ENCODE measurements at regions of chr2 and their contacts with region 1.

Region 1: DNA sequence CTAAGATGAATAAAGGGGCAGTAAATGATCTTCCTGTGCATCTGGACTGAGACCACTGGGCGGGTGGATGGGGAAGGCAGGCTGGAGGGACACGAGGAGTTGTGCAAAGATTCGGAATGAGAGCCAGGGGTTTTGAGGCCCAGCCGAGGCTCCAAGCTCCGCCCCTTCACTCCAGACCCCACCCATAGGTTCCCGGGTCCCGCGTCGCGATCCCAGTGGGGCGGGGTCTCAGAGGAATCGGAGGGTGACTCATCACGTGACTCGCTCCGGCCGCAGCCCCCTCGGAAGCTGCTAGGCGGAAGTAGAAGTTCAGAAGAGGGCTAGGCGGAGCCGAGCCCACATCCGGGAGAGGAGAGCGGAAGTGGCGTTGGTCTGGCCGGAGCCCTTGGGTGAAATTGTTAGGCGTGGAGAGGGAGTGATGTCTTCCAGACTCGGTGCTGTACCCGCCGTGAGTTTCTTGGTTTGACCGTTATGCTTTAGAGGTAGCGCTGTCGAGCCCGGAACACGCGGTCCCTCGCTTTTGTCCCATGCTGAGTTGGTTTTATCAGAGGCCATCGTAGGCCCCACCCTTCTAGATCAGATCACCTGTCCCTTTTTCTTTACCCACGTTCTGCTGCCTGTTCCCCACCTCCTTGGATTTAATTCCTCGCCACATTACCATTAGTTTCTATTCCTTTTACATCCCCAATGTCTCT is at the start of gene ZNF512:
- DNase-seq: peak; percentile 98
- ATAC-seq: peak; percentile 93
- H3K4me3 ChIP-seq: peak within 1 kb of the TSS; percentile 54
- H3K27ac ChIP-seq: peak within 1 kb of the TSS; percentile 83
- H3K4me1 ChIP-seq: peaks cover 13 to 43% of the 10 kb centered on the region in 2 experiments
- H3K27me3 ChIP-seq: no peaks in the 10 kb centered on the region
- CTCF ChIP-seq: peak in 2 of 3 experiments; percentile 12 to 24; a peak in 1 of 6 replicates
- EP300 ChIP-seq: 0 out of 2 replicates have a peak, but pooled peaks have one; percentile 10
- POLR2A ChIP-seq: peak; percentile 92
- RAD21 ChIP-seq: peak in 1 of 2 experiments; percentile 12; a peak in 1 of 4 replicates
- polyA plus RNA-seq, gene ZNF512: 24.7 to 77.9 TPM

Region 2: GRCh38 chr2:26911911-26912861 is 670.7 kb before region 1 on chr2:
- CTCF ChIA-PET with region 1: no interaction called
- POLR2A ChIA-PET with region 1: no interaction called
- in situ Hi-C with region 1: no loop called
- intact Hi-C with region 1: no loop called
- DNase-seq: no peak
- ATAC-seq: no peak
- H3K4me3 ChIP-seq: no peak overlapping the region
- H3K27ac ChIP-seq: no peak overlapping the region
- H3K4me1 ChIP-seq: no peaks in the 10 kb centered on the region
- H3K27me3 ChIP-seq: peaks cover 36 to 53% of the 10 kb centered on the region in 2 experiments
- CTCF ChIP-seq: no peak
- EP300 ChIP-seq: no peak
- POLR2A ChIP-seq: no peak
- RAD21 ChIP-seq: no peak

Region 3: DNA sequence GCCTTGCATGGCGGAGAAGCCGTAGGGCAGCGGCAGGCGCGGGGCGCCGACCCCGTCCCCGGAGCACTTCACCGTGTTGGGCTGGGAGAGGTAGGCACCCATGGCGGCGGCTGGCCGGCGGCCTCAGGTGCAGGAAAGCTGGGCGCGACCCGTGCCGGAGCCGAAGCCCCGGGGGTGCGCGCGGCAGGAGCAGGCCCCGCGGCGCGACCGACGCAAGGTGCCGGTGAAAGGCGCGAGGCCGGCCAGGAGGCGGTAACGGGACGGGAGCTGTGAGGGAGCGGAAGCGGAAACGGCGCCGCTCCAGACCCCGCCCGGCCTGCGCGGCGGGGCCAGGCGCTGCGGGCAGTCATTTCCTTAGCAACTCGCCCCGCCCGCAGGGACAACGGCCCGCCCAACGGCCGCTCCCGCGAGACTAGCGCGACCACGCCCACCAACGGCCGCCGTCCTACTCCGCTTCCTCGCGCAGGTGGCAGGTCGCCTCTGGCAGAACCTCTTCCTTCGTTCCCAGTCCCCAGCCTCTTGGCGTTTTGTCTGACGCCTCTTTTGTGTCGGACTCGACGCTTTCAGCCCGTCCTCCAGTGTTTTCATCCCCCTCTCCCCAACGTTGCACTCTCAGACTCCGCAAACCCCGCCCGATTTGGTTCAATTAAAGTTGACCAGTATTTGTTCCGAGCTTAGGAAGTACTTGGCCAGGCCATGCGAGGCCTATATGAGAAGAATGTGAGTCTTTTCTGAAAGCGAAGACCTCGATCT is 173.3 kb before region 1 on chr2 and contains the start of gene PPM1G:
- CTCF ChIA-PET with region 1: no interaction called
- POLR2A ChIA-PET with region 1: interaction called, 5 read pairs
- in situ Hi-C with region 1: no loop called
- intact Hi-C with region 1: loop called (anchors 5 kb)
- DNase-seq: peak; percentile 93 to 97 (median 94)
- ATAC-seq: peak; percentile 98
- H3K4me3 ChIP-seq: peak within 1 kb of the TSS; percentile 99
- H3K27ac ChIP-seq: peak within 1 kb of the TSS; percentile 93
- H3K4me1 ChIP-seq: peaks cover 6 to 26% of the 10 kb centered on the region in 2 experiments; a peak in 4 of 5 replicates
- H3K27me3 ChIP-seq: no peaks in the 10 kb centered on the region
- CTCF ChIP-seq: 0 out of 6 replicates have a peak, but pooled peaks of 1 of the 3 experiments have one; percentile 7
- EP300 ChIP-seq: peak; percentile 40
- POLR2A ChIP-seq: peak; percentile 95
- RAD21 ChIP-seq: no peak
- polyA plus RNA-seq, gene PPM1G: 61.7 to 88.8 TPM

Region 4: GRCh38 chr2:27428213-27428977 is 154.4 kb before region 1 on chr2 and contains the start of gene NRBP1:
- CTCF ChIA-PET with region 1: no interaction called
- POLR2A ChIA-PET with region 1: interaction called, 3 read pairs
- in situ Hi-C with region 1: no loop called
- intact Hi-C with region 1: loop called (anchors 5 kb)
- DNase-seq: peak; percentile 93 to 98 (median 95)
- ATAC-seq: peak; percentile 94
- H3K4me3 ChIP-seq: peak within 1 kb of the TSS; percentile 96
- H3K27ac ChIP-seq: peak within 1 kb of the TSS; percentile 91
- H3K4me1 ChIP-seq: peaks cover 18% of the 10 kb centered on the region in 2 experiments; a peak in 4 of 5 replicates
- H3K27me3 ChIP-seq: no peaks in the 10 kb centered on the region
- CTCF ChIP-seq: peak in 1 of 3 experiments; percentile 27; a peak in 1 of 6 replicates
- EP300 ChIP-seq: no peak
- POLR2A ChIP-seq: peak; percentile 91
- RAD21 ChIP-seq: no peak
- polyA plus RNA-seq, gene NRBP1: 2.9 to 7.8 TPM

Region 5: DNA sequence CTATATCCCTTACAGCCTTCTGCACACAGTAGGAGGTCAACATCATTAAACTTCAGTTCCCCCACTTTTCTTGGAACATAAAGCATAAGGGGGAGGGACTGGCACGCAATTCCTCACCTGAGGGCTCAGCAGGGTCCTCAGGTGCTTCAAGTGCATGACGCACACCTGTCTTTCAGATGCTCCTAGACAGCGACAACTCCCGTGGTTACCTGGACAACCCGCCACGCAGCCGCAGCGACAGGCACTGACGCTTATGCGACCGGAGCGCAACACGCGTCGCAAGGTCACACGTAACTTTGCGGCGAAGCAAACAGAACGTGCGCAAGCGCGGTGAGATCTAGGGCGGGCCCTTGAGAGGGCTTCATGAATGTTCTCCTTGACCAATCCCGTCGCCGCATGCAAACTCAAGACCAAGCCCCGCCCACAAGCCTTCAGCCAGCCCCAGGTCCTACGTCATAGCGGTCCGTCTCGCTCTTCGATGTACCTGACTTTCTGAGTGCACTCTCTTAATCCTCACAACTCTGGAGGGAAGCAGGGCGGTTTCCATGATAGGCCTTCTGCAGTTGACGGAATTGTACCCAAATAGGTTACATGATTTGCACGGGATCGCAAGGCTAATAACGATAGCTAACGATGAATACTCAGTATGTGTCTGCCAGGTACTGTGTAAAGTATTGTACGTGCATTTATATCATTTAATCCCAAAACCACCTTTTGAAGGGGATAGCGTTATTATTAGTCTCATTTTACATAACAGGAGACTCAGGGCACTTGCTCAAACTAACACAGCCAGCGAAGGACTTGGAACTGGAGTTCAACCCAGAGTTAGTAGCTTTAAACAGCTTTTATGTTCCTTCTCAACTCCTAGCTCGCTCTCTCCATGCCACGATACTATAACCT is 93.1 kb before region 1 on chr2 and contains the start of gene IFT172:
- CTCF ChIA-PET with region 1: no interaction called
- POLR2A ChIA-PET with region 1: no interaction called
- in situ Hi-C with region 1: no loop called
- intact Hi-C with region 1: loop called (anchors 2 kb)
- DNase-seq: peak; percentile 99 to 100 (median 99)
- ATAC-seq: peak; percentile 98
- H3K4me3 ChIP-seq: peak within 1 kb of the TSS; percentile 52
- H3K27ac ChIP-seq: peak within 1 kb of the TSS; percentile 73
- H3K4me1 ChIP-seq: peaks cover 6 to 10% of the 10 kb centered on the region in 2 experiments; a peak in 4 of 5 replicates
- H3K27me3 ChIP-seq: no peaks in the 10 kb centered on the region
- CTCF ChIP-seq: peak in 1 of 3 experiments; percentile 9; a peak in 1 of 6 replicates
- EP300 ChIP-seq: 0 out of 2 replicates have a peak, but pooled peaks have one; percentile 20
- POLR2A ChIP-seq: peak; percentile 86
- RAD21 ChIP-seq: peak in 1 of 2 experiments; percentile 30; a peak in 2 of 4 replicates
- polyA plus RNA-seq, gene IFT172: 5.6 to 7.3 TPM

Region 6: DNA sequence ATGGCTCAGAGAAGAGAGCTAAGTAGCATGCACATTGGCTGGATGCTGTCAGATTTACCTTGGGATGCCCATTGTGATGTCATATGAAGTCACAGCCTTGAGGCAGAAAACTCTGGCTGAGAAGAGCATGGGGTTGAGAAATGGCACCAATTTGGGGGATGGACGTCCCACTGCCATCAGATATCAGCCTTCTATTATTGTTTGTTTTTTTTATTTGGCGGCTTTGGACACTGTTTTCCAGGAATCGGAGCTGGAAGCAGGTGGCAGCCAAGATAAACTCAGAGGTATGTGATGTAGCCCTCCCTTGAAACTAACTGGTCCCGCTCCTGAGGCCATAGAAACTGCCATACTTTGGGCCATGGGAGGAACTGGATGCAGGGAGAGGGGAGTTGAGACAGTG is 45.6 kb before region 1 on chr2:
- CTCF ChIA-PET with region 1: no interaction called
- POLR2A ChIA-PET with region 1: no interaction called
- in situ Hi-C with region 1: no loop called
- intact Hi-C with region 1: loop called (anchors 5 kb)
- DNase-seq: peak; percentile 48 to 80 (median 60)
- ATAC-seq: peak; percentile 78
- H3K4me3 ChIP-seq: no peak overlapping the region
- H3K27ac ChIP-seq: peak overlapping the region; percentile 63
- H3K4me1 ChIP-seq: peaks cover 19 to 21% of the 10 kb centered on the region in 2 experiments
- H3K27me3 ChIP-seq: no peaks in the 10 kb centered on the region
- CTCF ChIP-seq: no peak
- EP300 ChIP-seq: peak; percentile 76; the same call in 1 of the 2 replicates
- POLR2A ChIP-seq: no peak
- RAD21 ChIP-seq: no peak

Region 7: DNA sequence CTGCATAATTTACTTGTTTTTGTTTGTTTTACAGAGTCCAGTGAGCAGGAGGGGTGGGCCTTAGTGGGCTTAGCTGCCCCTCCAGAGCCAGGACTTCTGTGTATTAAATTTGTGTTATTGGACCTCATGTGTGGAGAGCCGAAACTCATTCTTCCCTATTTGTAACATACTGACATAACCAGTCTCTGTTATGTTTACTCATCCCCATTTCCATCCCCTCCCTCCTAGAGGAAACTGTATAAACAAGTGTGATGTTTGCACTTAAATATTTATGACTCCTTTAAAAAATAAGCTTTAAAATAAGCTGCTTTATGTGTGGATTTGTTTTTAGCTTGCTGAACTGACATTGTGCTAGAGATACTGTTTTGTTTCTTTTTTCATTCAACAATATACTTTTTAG is 13.8 kb after region 1 on chr2:
- CTCF ChIA-PET with region 1: no interaction called
- POLR2A ChIA-PET with region 1: interaction called, 12 read pairs
- in situ Hi-C with region 1: no loop called
- intact Hi-C with region 1: no loop called
- DNase-seq: no peak
- ATAC-seq: no peak
- H3K4me3 ChIP-seq: no peak overlapping the region
- H3K27ac ChIP-seq: no peak overlapping the region
- H3K4me1 ChIP-seq: no peaks in the 10 kb centered on the region
- H3K27me3 ChIP-seq: no peaks in the 10 kb centered on the region
- CTCF ChIP-seq: no peak
- EP300 ChIP-seq: no peak
- POLR2A ChIP-seq: no peak
- RAD21 ChIP-seq: no peak

Measured in K562 (cell line).